ENCODE measurements at regions of chr14 and their contacts with region 1.

Region 1: DNA sequence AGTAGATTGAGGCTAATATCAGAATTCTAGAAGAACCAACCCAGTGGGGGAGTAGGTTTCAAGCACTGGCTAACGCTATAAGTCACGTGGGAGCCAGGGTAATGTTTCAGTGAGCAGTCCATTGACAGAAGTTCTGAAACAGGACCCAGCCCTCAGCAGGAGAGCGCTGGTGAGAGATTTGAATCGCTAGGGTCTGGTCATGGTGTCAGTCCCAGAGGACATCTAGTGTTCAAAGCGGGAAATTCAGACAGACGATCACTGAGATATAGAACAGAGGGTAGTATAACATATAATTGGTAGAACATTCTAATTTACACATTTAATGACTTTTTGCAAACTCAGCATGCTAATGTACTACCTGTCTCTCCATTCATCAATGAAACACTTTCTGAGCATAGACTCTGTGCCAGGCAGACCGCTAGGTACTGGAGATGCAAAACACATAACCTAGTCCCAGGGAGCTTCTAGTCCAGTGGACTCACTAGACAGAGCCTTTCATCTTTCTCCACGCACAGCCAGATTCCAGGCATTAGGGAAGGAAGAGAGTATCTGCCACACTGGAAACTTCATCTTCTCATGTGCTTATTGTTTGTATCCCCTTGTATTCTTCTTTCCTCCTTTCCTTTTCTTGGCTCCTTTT is 35.4 kb upstream of the RNASE3 start:
- DNase-seq: no peak
- ATAC-seq: peak; percentile 93

Region 2: GRCh38 chr14:20697273-20698017 is 158.3 kb before region 1 on chr14:
- intact Hi-C with region 1: loop called (anchors 1 kb)
- DNase-seq: no peak
- ATAC-seq: peak; percentile 81

Region 3: DNA sequence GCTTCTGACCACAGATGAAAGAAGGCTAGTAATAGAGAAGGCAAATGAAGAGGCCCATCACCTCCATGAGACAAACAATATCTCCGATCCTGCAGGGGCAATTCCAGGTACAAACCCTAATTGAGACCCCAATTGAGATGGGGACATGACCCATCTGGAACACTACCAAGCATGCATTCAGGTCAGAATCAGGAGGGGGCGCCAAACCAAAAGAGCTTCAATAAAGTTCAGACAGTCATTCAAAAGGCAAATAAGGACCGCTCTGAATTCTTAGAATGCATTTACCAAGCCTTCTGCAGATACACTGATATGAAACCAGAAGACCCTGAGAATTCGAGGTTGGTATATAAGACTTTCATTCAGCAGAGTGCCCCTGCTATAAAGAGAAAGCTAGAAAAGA is 97.8 kb before region 1 on chr14:
- intact Hi-C with region 1: loop called (anchors 2 kb)
- DNase-seq: no peak
- ATAC-seq: no peak

Region 4: GRCh38 chr14:20904393-20905029 is 48.7 kb after region 1 on chr14:
- intact Hi-C with region 1: no loop called
- DNase-seq: peak; percentile 68
- ATAC-seq: no peak

Region 5: GRCh38 chr14:21014761-21015190 is 159.0 kb after region 1 on chr14:
- intact Hi-C with region 1: no loop called
- DNase-seq: no peak
- ATAC-seq: peak; percentile 80

Region 6: GRCh38 chr14:21039585-21040369 is 184.0 kb after region 1 on chr14:
- intact Hi-C with region 1: loop called (anchors 1 kb)
- DNase-seq: no peak
- ATAC-seq: peak; percentile 73

Region 7: GRCh38 chr14:21092273-21093011 is 236.7 kb after region 1 on chr14:
- intact Hi-C with region 1: loop called (anchors 5 kb)
- DNase-seq: peak; percentile 94
- ATAC-seq: peak; percentile 88

Region 8: GRCh38 chr14:21103710-21104447 is 248.1 kb after region 1 on chr14:
- intact Hi-C with region 1: loop called (anchors 2 kb)
- DNase-seq: peak; percentile 97
- ATAC-seq: peak; percentile 96

Measured in Right ventricle myocardium inferior (tissue), 1 donor.